ENCODE measurements at regions of chr12 and their contacts with region 1.

Region 1: DNA sequence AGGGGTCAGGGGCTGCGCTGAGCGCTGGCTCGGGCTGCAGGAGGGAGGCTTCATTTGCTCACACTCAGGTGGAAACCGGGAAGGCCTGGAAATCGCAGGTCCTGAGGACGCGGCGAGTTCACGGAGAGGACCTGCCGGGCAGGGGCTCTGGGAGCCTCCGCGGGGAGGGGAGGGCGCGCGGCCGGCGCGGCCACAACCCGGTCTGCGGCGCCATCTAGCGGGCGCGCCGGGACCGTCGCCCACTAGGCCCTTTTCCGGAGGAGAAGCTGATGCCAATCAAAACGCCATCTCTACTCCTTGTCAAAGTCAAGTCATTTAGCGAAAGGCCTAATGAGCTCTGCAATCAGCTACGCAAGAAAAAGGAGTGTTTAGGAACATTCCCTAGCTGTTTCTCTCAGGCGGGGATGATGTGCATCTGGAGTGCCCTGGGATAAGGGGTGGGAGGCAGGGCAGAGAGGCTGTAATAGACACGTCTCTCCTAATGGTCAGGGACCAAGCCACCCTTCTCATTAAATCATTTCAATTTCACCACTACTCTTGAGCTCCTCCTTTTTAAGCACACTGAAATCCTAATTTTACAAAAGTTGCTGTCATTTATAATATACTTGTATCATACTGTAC is 885.8 kb upstream of the TMEM132C start:
- DNase-seq: peak; percentile 43
- H3K4me3 Mint-ChIP-seq: peak overlapping the region; percentile 29
- H3K27ac Mint-ChIP-seq: no peak overlapping the region
- H3K4me1 Mint-ChIP-seq: peaks cover 12% of the 10 kb centered on the region
- H3K27me3 Mint-ChIP-seq: no peaks in the 10 kb centered on the region
- CTCF ChIP-seq: peak; percentile 87

Region 2: GRCh38 chr12:126784328-126784921 is 596.7 kb before region 1 on chr12:
- CTCF ChIA-PET with region 1: interaction called, 26 read pairs
- POLR2A ChIA-PET with region 1: no interaction called
- intact Hi-C with region 1: loop called (anchors 1 kb)
- DNase-seq: peak; percentile 64
- H3K4me3 Mint-ChIP-seq: no peak overlapping the region
- H3K27ac Mint-ChIP-seq: no peak overlapping the region
- H3K4me1 Mint-ChIP-seq: no peaks in the 10 kb centered on the region
- H3K27me3 Mint-ChIP-seq: peaks cover 28% of the 10 kb centered on the region
- CTCF ChIP-seq: peak; percentile 70

Region 3: GRCh38 chr12:127025545-127025944 is 355.6 kb before region 1 on chr12:
- CTCF ChIA-PET with region 1: interaction called, 3 read pairs
- POLR2A ChIA-PET with region 1: no interaction called
- intact Hi-C with region 1: loop called (anchors 10 kb)
- DNase-seq: peak; percentile 14
- H3K4me3 Mint-ChIP-seq: no peak overlapping the region
- H3K27ac Mint-ChIP-seq: no peak overlapping the region
- H3K4me1 Mint-ChIP-seq: no peaks in the 10 kb centered on the region
- H3K27me3 Mint-ChIP-seq: no peaks in the 10 kb centered on the region
- CTCF ChIP-seq: peak; percentile 18

Region 4: DNA sequence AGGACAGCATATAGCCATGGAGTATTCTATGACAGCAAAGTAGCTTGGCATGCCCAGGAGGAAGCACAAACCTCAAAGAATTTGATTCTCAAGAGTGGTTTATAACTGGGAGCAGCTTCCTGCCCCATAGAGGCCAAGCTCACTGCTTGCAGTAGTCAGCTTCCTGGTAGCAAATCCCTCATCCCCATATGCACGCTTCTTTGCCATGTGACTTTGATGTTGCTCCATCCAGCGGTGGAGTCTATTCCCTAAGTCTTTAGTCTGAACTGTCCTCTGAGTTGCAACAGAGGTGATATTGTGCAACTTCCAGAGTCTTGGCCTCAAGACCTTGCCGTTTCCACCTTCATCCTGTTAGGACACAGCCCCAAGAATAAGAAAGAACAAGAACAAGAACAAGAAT is 111.0 kb before region 1 on chr12:
- CTCF ChIA-PET with region 1: no interaction called
- POLR2A ChIA-PET with region 1: no interaction called
- intact Hi-C with region 1: no loop called
- DNase-seq: peak; percentile 98
- H3K4me3 Mint-ChIP-seq: peak overlapping the region; percentile 1
- H3K27ac Mint-ChIP-seq: peak overlapping the region; percentile 1
- H3K4me1 Mint-ChIP-seq: peaks cover 27% of the 10 kb centered on the region
- H3K27me3 Mint-ChIP-seq: no peaks in the 10 kb centered on the region
- CTCF ChIP-seq: no peak

Region 5: GRCh38 chr12:127293507-127294310 is 87.4 kb before region 1 on chr12:
- CTCF ChIA-PET with region 1: interaction called, 3 read pairs
- POLR2A ChIA-PET with region 1: no interaction called
- intact Hi-C with region 1: loop called (anchors 5 kb)
- DNase-seq: peak; percentile 83
- H3K4me3 Mint-ChIP-seq: no peak overlapping the region
- H3K27ac Mint-ChIP-seq: no peak overlapping the region
- H3K4me1 Mint-ChIP-seq: peaks cover 7% of the 10 kb centered on the region
- H3K27me3 Mint-ChIP-seq: no peaks in the 10 kb centered on the region
- CTCF ChIP-seq: peak; percentile 94